HepG2 (cell line): ENCODE measurements at regions of chr22 and their contacts with region 1.

Region 1: DNA sequence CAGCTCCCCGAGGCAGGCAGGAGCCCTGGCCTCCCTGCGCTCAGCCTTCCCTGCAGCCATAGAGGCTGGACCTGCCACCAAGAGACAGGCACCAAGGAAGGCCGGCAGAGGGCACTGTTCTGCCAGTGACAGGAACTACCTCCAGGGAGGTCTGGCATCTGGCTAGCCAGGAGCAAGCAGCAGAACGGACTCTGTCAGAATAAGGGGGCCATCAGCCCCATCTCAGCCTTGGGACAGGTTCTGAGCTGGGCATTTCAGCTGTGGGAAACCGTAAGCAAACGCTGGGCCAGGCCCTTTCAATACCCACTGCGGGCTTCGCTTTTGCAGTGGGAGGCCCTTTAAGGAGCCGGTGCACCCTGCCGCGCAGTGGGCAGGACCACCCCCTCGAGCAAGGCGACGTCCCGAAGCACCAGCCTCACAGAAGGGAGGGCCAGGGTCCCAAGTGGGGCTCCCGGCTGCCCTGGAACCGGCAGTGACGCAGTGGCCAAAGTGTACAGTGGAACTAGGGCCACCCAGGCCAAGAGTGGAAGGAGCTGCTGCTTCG is 18.2 kb downstream of the IFT27 start:
- DNase-seq: peak; percentile 58
- ATAC-seq: peak; percentile 95
- H3K4me3 ChIP-seq: no peak overlapping the region
- H3K27ac ChIP-seq: no peak overlapping the region
- H3K4me1 ChIP-seq: no peaks in the 10 kb centered on the region
- H3K27me3 ChIP-seq: peaks cover 4 to 56% of the 10 kb centered on the region in 2 experiments
- CTCF ChIP-seq: peak; percentile 86
- EP300 ChIP-seq: no peak
- POLR2A ChIP-seq: no peak
- RAD21 ChIP-seq: peak; percentile 38; the same call in 1 of the 2 replicates

Region 2: DNA sequence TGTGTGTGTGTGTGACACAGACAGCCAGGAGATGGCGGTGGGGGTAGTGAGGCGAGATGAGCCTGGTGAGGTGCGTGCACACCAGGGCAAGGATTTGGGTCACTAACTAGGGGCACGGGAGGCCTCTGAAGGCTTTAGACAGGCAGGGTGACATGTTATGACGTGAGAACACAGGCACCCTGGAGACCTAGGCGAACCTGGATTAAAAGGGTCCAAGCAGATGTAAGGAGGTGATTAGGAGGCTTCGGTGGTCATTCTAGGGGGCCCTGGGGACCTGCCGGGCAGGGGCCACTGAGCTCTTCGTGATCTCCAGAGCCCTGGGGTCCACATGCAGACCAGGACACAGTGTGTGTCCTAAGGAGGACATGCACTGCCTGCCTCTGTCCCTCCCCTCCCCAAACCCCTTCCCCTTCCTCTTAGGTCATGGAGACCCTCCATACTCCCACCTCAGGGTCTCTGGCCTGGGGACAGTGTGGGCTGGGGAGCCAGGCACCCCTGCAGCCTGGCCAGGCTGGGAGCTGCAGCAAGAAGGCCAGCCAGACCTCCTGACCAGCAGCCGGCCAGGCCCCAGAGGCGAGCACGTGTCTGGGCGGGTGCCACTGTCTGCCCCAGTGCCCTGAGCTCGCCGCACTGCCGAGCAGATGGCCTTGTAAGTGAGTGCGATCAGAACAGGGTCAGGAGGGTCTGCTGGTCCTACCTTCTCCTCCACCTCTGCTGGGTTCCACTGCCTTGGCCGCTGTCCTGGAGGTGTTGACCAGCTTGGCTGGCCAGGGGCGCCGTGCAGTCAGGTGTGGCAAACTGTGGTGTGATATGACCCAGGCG is 13.9 kb before region 1 on chr22:
- CTCF ChIA-PET with region 1: interaction called, 3 read pairs
- POLR2A ChIA-PET with region 1: no interaction called
- in situ Hi-C with region 1: no loop called
- intact Hi-C with region 1: loop called (anchors 2 kb)
- DNase-seq: no peak
- ATAC-seq: peak; percentile 51; the same call in 2 of the 3 replicates
- H3K4me3 ChIP-seq: no peak overlapping the region
- H3K27ac ChIP-seq: no peak overlapping the region
- H3K4me1 ChIP-seq: no peaks in the 10 kb centered on the region
- H3K27me3 ChIP-seq: peaks cover 10 to 29% of the 10 kb centered on the region in 2 experiments; a peak in 4 of 5 replicates
- CTCF ChIP-seq: no peak
- EP300 ChIP-seq: no peak
- POLR2A ChIP-seq: no peak
- RAD21 ChIP-seq: no peak